Heart left ventricle (tissue), 16 donors: ENCODE measurements at regions of chr1 and their contacts with region 1.

Region 1: GRCh38 chr1:27392096-27392777 is at the start of gene GPR3:
- DNase-seq: peak; percentile 91 to 96 (median 94)
- ATAC-seq: peak; percentile 81 to 90 (median 88)
- H3K4me3 ChIP-seq: peak within 1 kb of the TSS; percentile 32 to 78 (median 58)
- H3K27ac ChIP-seq: peak within 1 kb of the TSS in 11 of 12 donors; percentile 51 to 83 (median 71)
- H3K4me1 ChIP-seq: peaks cover 7 to 51% (median 28%) of the 10 kb centered on the region in 12 donors
- H3K27me3 ChIP-seq: no peaks in the 10 kb centered on the region
- CTCF ChIP-seq: peak; percentile 19 to 80 (median 58)
- POLR2A ChIP-seq: peak in 1 of 2 donors; percentile 67
- total RNA-seq, gene GPR3: 0.28 to 2.4 (median 0.53) TPM in 8 of 9 donors, not detected in the other

Region 2: GRCh38 chr1:26677306-26678115 is 714.7 kb before region 1 on chr1:
- intact Hi-C with region 1: no loop called
- DNase-seq: peak; percentile 70 to 83 (median 78)
- ATAC-seq: peak; percentile 91 to 98 (median 97)
- H3K4me3 ChIP-seq: peak overlapping the region in 7 of 12 donors; percentile 5 to 37 (median 25)
- H3K27ac ChIP-seq: peak overlapping the region in 6 of 12 donors; percentile 1 to 69 (median 18)
- H3K4me1 ChIP-seq: peaks cover 0 to 20% (median 7%) of the 10 kb centered on the region in 12 donors
- H3K27me3 ChIP-seq: no peaks in the 10 kb centered on the region
- CTCF ChIP-seq: peak; percentile 43 to 76 (median 58)
- POLR2A ChIP-seq: no peak

Region 3: GRCh38 chr1:26907071-26907917 is 484.9 kb before region 1 on chr1:
- intact Hi-C with region 1: no loop called
- DNase-seq: no peak
- ATAC-seq: no peak
- H3K4me3 ChIP-seq: no peak overlapping the region
- H3K27ac ChIP-seq: no peak overlapping the region
- H3K4me1 ChIP-seq: peaks cover 0 to 11% (median 0%) of the 10 kb centered on the region in 12 donors
- H3K27me3 ChIP-seq: no peaks in the 10 kb centered on the region
- CTCF ChIP-seq: no peak
- POLR2A ChIP-seq: no peak

Region 4: GRCh38 chr1:27044613-27045151 is 347.6 kb before region 1 on chr1:
- intact Hi-C with region 1: loop called in 3 of 10 experiments (anchors 10 kb)
- DNase-seq: peak; percentile 84 to 93 (median 86)
- ATAC-seq: peak; percentile 77 to 93 (median 90)
- H3K4me3 ChIP-seq: peak overlapping the region in 9 of 12 donors; percentile 20 to 49 (median 29)
- H3K27ac ChIP-seq: peak overlapping the region in 7 of 12 donors; percentile 5 to 60 (median 43)
- H3K4me1 ChIP-seq: peaks cover 0 to 22% (median 10%) of the 10 kb centered on the region in 12 donors
- H3K27me3 ChIP-seq: no peaks in the 10 kb centered on the region
- CTCF ChIP-seq: peak; percentile 97 to 99 (median 98)
- POLR2A ChIP-seq: no peak

Region 5: DNA sequence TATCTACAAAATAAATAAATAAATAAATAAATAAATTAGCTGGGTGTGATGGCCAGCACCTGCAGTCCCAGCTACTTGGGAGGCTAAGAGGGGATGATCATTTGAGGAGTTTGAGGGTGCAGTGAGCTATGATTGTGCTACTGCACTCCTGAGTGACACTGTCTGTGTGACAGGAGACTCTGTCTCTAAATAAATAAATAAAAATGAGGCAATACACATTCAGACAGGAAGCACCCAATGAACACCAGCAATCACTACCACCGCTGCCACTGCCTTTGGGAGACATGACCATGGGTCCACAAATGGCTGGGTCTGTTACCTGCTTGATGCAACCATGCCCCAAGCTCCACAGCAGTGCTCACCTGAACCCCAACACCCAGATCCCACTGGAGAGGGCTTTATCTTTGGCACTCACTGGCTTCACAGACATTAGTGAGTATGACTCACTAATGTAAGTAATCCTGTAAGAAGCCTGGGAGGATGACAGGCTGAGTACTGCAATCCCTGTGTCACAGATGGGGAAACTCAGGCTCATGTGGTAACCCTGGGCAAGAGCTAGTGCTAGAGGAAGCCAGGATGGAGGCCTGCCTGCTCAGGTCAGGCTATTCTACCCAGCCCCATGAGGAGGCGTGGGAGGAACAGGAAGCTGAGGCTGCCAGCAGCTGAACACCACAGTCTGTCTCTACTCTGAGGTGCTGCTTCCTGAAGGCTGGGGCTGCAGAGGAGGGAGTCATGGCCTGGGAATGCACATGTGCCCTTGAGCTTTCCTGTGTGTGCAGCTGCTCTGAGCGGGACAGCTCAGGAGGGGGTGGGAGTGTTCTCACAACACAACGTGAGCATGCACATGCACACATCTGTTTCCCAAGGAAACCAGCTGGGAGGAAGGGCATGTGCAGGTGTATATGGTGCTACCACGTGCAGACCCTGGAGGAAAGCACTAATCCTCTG is 280.3 kb before region 1 on chr1:
- intact Hi-C with region 1: loop called in 4 of 10 experiments (anchors 10 kb)
- DNase-seq: peak; percentile 79 to 92 (median 82)
- ATAC-seq: peak; percentile 58 to 95 (median 94)
- H3K4me3 ChIP-seq: no peak overlapping the region
- H3K27ac ChIP-seq: peak overlapping the region in 9 of 12 donors; percentile 25 to 80 (median 54)
- H3K4me1 ChIP-seq: peaks cover 0 to 64% (median 26%) of the 10 kb centered on the region in 12 donors
- H3K27me3 ChIP-seq: no peaks in the 10 kb centered on the region
- CTCF ChIP-seq: peak in 6 of 12 donors; percentile 16 to 37 (median 22)
- POLR2A ChIP-seq: peak in 1 of 2 donors; percentile 21

Region 6: GRCh38 chr1:27332536-27333281 is 59.5 kb before region 1 on chr1:
- intact Hi-C with region 1: loop called in 1 of 10 experiments (anchors 2 kb)
- DNase-seq: peak in 3 of 5 donors; percentile 49 to 75 (median 53)
- ATAC-seq: peak; percentile 16 to 58 (median 54)
- H3K4me3 ChIP-seq: no peak overlapping the region
- H3K27ac ChIP-seq: peak overlapping the region in 7 of 12 donors; percentile 27 to 62 (median 34)
- H3K4me1 ChIP-seq: peaks cover 3 to 38% (median 18%) of the 10 kb centered on the region in 12 donors
- H3K27me3 ChIP-seq: no peaks in the 10 kb centered on the region
- CTCF ChIP-seq: peak; percentile 68 to 88 (median 79)
- POLR2A ChIP-seq: no peak

Region 7: GRCh38 chr1:27365372-27366112 is 26.7 kb before region 1 on chr1:
- intact Hi-C with region 1: loop called in 3 of 10 experiments (anchors 2 kb)
- DNase-seq: peak; percentile 91 to 94 (median 92)
- ATAC-seq: peak; percentile 70 to 88 (median 80)
- H3K4me3 ChIP-seq: peak overlapping the region; percentile 70 to 93 (median 81)
- H3K27ac ChIP-seq: peak overlapping the region; percentile 96 to 100 (median 99)
- H3K4me1 ChIP-seq: peaks cover 7 to 58% (median 37%) of the 10 kb centered on the region in 12 donors
- H3K27me3 ChIP-seq: no peaks in the 10 kb centered on the region
- CTCF ChIP-seq: no peak
- POLR2A ChIP-seq: peak in 1 of 2 donors; percentile 32

Region 8: GRCh38 chr1:27436204-27437159 is 44.2 kb after region 1 on chr1:
- intact Hi-C with region 1: no loop called
- DNase-seq: peak in 1 of 5 donors; percentile 30
- ATAC-seq: peak; percentile 74 to 88 (median 85)
- H3K4me3 ChIP-seq: peak overlapping the region in 5 of 12 donors; percentile 1 to 43 (median 8)
- H3K27ac ChIP-seq: peak overlapping the region; percentile 49 to 94 (median 74)
- H3K4me1 ChIP-seq: peaks cover 20 to 90% (median 78%) of the 10 kb centered on the region in 12 donors
- H3K27me3 ChIP-seq: no peaks in the 10 kb centered on the region
- CTCF ChIP-seq: no peak
- POLR2A ChIP-seq: peak in 1 of 2 donors; percentile 67